GM12878 (cell line): ENCODE measurements at regions of chr12 and their contacts with region 1.

Region 1: DNA sequence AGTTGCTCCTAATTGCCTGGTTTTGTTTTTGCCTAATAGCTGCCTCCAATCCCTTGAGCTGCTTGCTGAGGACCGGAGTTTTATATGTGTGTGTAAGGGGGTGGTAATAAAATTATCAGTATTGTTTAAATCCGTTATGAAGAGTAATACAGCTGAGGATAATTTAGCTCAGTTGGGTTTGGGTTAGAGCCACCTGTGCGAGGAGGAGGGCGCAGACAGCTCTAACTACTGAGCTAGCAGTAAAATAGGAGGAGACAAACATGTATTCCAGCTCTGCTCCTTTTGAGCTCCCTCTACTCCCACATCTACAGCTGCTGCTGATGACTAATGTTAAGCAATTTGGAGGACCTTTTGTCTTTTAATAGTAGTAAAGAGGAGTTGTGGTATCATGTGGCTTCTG is 61.5 kb downstream of the SPATS2 start:
- DNase-seq: peak; percentile 38
- ATAC-seq: peak; percentile 87
- H3K4me3 ChIP-seq: peak overlapping the region; percentile 33; the same call in 1 of the 2 replicates
- H3K27ac ChIP-seq: peak overlapping the region; percentile 96
- H3K4me1 ChIP-seq: peaks cover 20% of the 10 kb centered on the region
- H3K27me3 ChIP-seq: no peaks in the 10 kb centered on the region
- CTCF ChIP-seq: no peak
- EP300 ChIP-seq: no peak
- POLR2A ChIP-seq: no peak
- RAD21 ChIP-seq: no peak

Region 2: DNA sequence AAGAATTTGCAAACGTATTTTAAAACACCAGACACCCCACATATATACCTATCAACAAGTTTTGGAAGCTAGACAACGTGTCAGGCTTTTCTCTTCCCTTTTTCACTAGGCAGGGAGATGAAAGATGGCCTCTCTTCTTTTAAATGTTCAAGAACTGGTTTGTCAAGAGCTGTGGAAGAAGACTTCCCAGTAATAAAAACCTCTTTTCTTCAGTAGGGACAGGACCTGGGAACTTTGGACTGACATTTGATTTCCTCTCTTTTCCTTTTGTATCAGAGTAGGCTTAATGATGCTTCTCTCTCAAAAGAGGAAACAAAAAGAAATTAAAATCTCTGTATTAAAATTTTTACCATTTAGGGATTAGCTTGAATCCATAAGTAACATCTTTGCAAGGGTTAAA is 11.9 kb before region 1 on chr12:
- CTCF ChIA-PET with region 1: interaction called, 7 read pairs
- POLR2A ChIA-PET with region 1: interaction called, 5 read pairs
- RAD21 ChIA-PET with region 1: interaction called, 4 read pairs
- SMC1A ChIA-PET with region 1: interaction called, 27 read pairs
- in situ Hi-C with region 1: no loop called
- intact Hi-C with region 1: no loop called
- DNase-seq: no peak
- ATAC-seq: no peak
- H3K4me3 ChIP-seq: no peak overlapping the region
- H3K27ac ChIP-seq: no peak overlapping the region
- H3K4me1 ChIP-seq: no peaks in the 10 kb centered on the region
- H3K27me3 ChIP-seq: no peaks in the 10 kb centered on the region
- CTCF ChIP-seq: no peak
- EP300 ChIP-seq: no peak
- POLR2A ChIP-seq: no peak
- RAD21 ChIP-seq: no peak

Region 3: DNA sequence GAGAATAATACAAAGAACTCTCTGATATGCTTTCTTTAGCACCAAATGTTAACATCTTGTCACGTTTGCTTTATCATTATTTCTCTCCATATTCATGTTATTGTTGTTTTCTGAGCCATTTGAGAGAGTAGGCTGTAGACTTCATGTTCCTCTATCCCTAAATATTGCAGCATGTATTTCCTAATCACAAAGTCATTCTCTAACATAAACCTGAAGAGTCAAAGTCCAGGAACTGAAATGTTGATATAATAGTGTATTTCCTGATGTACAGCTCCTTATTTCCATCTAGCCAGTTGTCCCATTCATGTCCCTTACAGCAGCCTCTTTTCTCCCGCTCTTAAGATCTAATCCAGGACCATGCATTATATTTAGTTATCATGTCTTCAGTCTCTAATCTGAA is 11.2 kb after region 1 on chr12:
- CTCF ChIA-PET with region 1: interaction called, 4 read pairs
- POLR2A ChIA-PET with region 1: no interaction called
- RAD21 ChIA-PET with region 1: interaction called, 4 read pairs
- SMC1A ChIA-PET with region 1: interaction called, 17 read pairs
- in situ Hi-C with region 1: no loop called
- intact Hi-C with region 1: no loop called
- DNase-seq: no peak
- ATAC-seq: no peak
- H3K4me3 ChIP-seq: no peak overlapping the region
- H3K27ac ChIP-seq: no peak overlapping the region
- H3K4me1 ChIP-seq: no peaks in the 10 kb centered on the region
- H3K27me3 ChIP-seq: no peaks in the 10 kb centered on the region
- CTCF ChIP-seq: no peak
- EP300 ChIP-seq: no peak
- POLR2A ChIP-seq: no peak
- RAD21 ChIP-seq: no peak

Region 4: DNA sequence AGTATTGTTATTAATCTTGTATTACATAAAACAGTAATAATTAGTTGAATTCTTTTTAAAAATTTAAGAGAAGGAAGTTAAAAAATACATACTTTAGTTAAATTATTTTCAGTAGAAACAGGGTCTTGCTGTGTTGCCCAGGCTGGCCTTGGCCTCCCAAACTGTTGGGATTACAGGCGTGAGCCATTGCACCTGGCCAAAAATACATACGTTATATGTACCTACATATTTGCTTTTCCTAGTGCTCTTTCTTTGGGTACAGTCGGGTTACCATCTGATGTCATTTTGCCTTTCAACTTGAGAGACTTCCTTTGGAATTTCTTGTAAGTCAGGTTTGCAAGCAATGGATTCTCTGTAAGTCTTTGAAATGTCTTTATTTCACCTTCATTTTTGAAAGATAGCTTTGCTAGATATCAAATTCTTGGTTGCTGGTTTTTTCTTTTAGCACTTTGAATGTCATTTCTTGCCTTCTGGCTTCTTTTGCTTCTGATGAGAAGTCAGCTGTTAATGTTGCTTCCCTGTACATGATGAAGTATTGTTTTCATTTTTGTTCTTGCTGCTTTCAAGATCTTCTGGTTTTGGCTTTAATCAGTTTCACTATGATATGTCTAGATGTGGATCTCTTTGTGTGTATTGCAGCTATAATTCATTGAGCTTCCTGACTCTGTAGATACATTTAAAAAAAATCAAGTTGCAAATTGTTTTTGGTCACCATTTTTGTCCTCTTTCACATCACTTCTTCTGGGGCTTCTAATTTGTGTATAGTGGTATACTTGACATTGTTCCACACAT is 22.9 kb after region 1 on chr12:
- CTCF ChIA-PET with region 1: interaction called, 4 read pairs
- POLR2A ChIA-PET with region 1: interaction called, 3 read pairs
- RAD21 ChIA-PET with region 1: interaction called, 4 read pairs
- SMC1A ChIA-PET with region 1: interaction called, 12 read pairs
- in situ Hi-C with region 1: no loop called
- intact Hi-C with region 1: no loop called
- DNase-seq: peak; percentile 62
- ATAC-seq: peak; percentile 96
- H3K4me3 ChIP-seq: no peak overlapping the region
- H3K27ac ChIP-seq: peak overlapping the region; percentile 74
- H3K4me1 ChIP-seq: peaks cover 18% of the 10 kb centered on the region
- H3K27me3 ChIP-seq: no peaks in the 10 kb centered on the region
- CTCF ChIP-seq: no peak
- EP300 ChIP-seq: no peak
- POLR2A ChIP-seq: no peak
- RAD21 ChIP-seq: no peak

Region 5: DNA sequence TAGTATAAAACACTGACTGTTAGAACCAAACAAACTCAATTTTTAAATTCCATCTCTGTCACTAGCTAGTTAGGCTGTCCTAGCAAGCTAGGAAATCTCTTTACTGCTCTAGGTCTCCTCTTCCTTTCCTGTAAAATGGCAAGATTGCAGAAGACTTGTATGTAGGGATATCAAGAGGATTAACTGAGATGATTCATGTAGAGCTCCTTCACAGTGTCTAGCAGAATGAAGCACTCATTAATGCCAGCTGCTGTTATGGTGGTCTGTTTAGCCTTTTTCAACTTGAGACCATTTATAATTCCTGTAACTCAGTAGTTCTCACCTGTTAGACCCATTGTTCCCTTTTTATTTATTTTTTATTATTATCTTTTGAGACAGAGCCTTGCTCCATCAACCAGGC is 42.2 kb after region 1 on chr12:
- CTCF ChIA-PET with region 1: interaction called, 3 read pairs
- POLR2A ChIA-PET with region 1: interaction called, 6 read pairs
- RAD21 ChIA-PET with region 1: interaction called, 8 read pairs
- SMC1A ChIA-PET with region 1: interaction called, 12 read pairs
- in situ Hi-C with region 1: no loop called
- intact Hi-C with region 1: no loop called
- DNase-seq: no peak
- ATAC-seq: peak; percentile 40
- H3K4me3 ChIP-seq: no peak overlapping the region
- H3K27ac ChIP-seq: no peak overlapping the region
- H3K4me1 ChIP-seq: no peaks in the 10 kb centered on the region
- H3K27me3 ChIP-seq: no peaks in the 10 kb centered on the region
- CTCF ChIP-seq: no peak
- EP300 ChIP-seq: no peak
- POLR2A ChIP-seq: no peak
- RAD21 ChIP-seq: no peak

Region 6: DNA sequence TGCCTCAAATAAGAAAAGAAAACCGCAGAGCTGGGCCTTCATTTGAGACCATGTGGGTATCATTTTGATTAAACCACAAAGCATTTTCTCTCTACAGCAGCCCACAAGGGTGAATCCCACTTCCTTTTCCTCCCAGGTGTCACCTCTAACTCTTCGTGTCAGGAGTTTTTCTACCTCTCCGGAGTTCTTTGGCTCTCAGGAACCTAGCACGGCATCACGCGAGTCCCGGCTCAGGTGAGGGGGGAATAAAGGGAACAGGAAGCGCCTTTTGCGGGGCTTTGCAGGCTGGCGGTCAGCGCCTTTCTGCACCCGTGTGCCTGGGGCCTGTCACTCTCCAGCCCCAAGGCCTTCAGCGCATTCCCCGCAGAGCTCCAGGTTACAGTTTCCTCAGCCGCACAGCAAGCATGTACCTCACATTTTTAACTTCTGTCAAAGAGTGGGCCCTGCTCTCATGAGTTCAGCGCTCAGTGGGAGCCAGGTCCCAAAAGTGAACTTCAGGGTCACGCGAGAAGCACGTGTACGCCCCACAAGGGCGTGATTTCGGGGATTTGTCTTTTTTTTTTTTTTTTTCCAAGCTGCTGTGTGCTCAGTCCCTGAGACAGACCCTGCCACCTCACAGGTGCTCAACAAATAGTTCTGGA is 193.8 kb after region 1 on chr12:
- CTCF ChIA-PET with region 1: no interaction called
- POLR2A ChIA-PET with region 1: no interaction called
- RAD21 ChIA-PET with region 1: no interaction called
- SMC1A ChIA-PET with region 1: no interaction called
- in situ Hi-C with region 1: no loop called
- intact Hi-C with region 1: no loop called
- DNase-seq: peak; percentile 55
- ATAC-seq: peak; percentile 55
- H3K4me3 ChIP-seq: peak overlapping the region; percentile 85
- H3K27ac ChIP-seq: peak overlapping the region; percentile 75
- H3K4me1 ChIP-seq: peaks cover 17% of the 10 kb centered on the region
- H3K27me3 ChIP-seq: no peaks in the 10 kb centered on the region
- CTCF ChIP-seq: no peak
- EP300 ChIP-seq: peak in 1 of 2 experiments; percentile 19; a peak in 1 of 4 replicates
- POLR2A ChIP-seq: no peak
- RAD21 ChIP-seq: no peak

Region 7: DNA sequence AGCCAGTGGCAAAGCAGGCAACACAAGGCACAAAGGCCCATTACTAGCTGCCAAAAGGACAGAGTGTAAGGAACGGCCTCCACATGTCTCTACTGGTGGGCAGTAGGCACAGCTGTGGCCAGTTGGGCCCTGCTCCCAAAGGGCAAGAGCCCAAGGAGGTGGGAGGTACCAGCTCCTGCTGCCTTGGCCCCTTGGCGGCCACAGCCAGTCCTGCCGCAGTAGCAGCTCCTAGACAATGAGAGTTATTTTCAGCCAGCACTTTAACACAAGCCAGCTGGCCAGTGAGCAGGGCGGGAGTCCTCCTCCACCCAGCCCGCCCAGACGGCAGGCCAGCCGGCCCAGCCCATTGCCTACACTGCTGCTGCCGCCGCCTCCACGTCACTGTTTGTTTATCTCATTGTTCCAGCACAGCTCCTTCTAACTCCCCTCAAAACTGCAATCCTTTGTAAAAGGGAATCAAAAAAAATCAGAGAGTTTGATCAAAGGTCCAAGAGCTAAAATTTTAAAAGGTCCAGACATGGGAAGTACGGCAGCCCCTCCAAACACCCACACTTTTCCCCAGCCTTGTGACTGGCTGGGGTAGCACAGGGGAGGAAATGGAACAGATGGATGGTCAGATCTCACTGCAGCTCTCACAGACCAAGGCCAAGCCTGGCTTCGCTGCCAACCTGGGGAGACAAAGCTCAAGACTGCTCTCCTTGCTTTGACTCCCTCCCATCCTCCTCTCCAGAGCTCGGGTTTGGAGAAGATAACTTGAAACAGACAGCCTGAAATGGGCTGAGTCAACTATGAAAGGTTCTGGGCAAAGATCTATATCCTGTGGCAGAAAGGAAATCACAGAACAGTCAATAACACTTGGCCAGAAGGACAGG is 244.9 kb after region 1 on chr12:
- CTCF ChIA-PET with region 1: no interaction called
- POLR2A ChIA-PET with region 1: no interaction called
- RAD21 ChIA-PET with region 1: no interaction called
- SMC1A ChIA-PET with region 1: no interaction called
- in situ Hi-C with region 1: no loop called
- intact Hi-C with region 1: no loop called
- DNase-seq: no peak
- ATAC-seq: no peak; the same call in 2 of the 3 replicates
- H3K4me3 ChIP-seq: no peak overlapping the region
- H3K27ac ChIP-seq: peak overlapping the region; percentile 92
- H3K4me1 ChIP-seq: peaks cover 56% of the 10 kb centered on the region
- H3K27me3 ChIP-seq: no peaks in the 10 kb centered on the region
- CTCF ChIP-seq: no peak
- EP300 ChIP-seq: no peak
- POLR2A ChIP-seq: no peak
- RAD21 ChIP-seq: no peak